ENCODE measurements at regions of chr3 and their contacts with region 1.

Region 1: DNA sequence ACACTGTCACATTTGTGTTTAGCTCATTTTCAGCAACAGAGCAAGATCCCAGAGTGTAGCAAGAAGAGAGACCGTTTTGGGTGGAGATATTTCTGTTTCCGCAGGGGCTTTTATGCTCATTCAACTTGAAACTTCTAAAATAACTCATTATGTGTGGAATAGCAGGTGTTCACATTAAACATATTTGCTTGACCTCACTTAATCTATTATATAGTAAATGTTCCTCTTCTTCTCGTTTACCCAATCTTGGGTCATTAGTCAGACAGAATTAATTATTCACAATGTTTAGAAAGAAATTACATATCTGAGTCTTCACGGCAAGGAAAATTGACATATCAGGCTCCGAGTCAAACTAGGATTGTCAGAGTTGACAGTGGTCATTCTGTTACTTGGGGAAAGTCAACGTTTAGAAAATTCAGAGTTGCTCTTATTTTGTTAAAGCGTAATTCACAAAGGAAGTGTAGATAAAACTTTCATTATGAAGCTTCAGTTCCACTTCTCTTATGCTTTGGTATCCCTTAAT is 222.9 kb downstream of the TPRG1 start:
- DNase-seq: peak; percentile 64
- ATAC-seq: peak; percentile 90
- H3K4me3 ChIP-seq: peak overlapping the region; percentile 6; the same call in 1 of the 2 replicates
- H3K27ac ChIP-seq: peak overlapping the region; percentile 86
- H3K4me1 ChIP-seq: peaks cover 28% of the 10 kb centered on the region
- H3K27me3 ChIP-seq: no peaks in the 10 kb centered on the region
- CTCF ChIP-seq: no peak
- EP300 ChIP-seq: peak; percentile 37 to 59; a peak in 3 of 4 replicates
- POLR2A ChIP-seq: no peak
- RAD21 ChIP-seq: 0 out of 2 replicates have a peak, but pooled peaks have one; percentile 20

Region 2: DNA sequence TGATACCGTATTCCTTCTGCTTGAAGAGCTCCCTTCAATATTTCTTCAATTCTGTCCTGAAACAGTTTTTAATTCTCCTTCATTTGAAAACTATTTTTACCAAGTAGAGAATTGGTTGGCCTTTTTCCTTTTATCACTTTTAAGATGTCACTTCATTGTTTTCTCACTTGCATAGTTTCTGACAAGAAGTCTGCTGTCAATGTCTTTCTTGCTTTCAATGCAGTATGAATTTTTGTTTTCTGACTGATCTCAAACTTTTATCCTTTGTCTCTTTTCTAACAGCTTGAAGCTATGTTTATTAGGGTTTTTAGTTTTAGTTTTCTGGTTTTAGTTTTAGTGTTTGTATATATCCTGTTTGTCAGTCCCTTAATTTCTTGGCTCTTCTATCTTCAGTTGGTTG is 587.7 kb before region 1 on chr3:
- CTCF ChIA-PET with region 1: no interaction called
- POLR2A ChIA-PET with region 1: no interaction called
- RAD21 ChIA-PET with region 1: no interaction called
- SMC1A ChIA-PET with region 1: no interaction called
- in situ Hi-C with region 1: no loop called
- intact Hi-C with region 1: no loop called
- DNase-seq: no peak
- ATAC-seq: no peak
- H3K4me3 ChIP-seq: no peak overlapping the region
- H3K27ac ChIP-seq: no peak overlapping the region
- H3K4me1 ChIP-seq: no peaks in the 10 kb centered on the region
- H3K27me3 ChIP-seq: no peaks in the 10 kb centered on the region
- CTCF ChIP-seq: no peak
- EP300 ChIP-seq: no peak
- POLR2A ChIP-seq: no peak
- RAD21 ChIP-seq: no peak

Region 3: DNA sequence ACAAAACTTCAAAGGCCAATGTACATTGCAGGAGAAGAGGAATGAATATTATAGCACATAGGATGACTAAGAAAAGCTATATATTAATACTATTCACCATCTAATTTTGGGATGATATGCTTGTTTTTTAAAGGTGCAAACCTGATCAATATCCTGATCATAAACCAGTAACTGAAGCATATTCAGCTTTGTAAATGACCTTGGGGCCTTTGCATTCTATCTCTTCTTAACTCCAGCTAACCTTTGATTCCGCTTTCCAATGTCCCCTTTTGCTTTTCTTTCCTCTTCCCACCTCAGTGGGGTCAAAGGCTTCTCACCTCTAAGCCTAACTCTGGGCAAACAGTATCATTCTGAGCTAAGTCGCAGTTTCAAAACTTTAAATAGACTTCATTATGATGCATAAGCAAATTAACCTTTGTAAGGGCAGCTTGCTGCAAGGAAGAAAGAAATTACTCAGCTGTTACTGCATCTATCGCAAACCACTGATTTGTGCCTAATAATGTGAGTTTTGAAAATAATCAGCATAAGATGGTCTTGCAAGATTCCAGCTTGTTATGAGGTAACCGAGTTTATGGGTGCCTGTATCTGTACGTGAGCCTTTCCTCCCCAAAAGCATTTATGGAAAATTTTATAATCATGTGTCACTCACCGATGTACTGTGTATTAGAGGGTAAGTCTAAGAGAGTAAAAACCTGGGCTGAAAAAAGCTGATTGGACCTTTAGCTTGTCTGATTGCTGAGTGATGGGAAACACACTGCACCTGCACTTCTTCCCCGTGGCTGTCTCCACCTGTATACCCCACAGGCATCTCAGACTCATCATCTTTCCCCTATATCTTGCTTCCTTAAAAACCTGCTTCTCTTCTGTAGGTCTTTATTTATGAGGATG is 106.1 kb before region 1 on chr3:
- CTCF ChIA-PET with region 1: interaction called, 6 read pairs
- POLR2A ChIA-PET with region 1: no interaction called
- RAD21 ChIA-PET with region 1: interaction called, 3 read pairs
- SMC1A ChIA-PET with region 1: interaction called, 3 read pairs
- in situ Hi-C with region 1: no loop called
- intact Hi-C with region 1: loop called (anchors 5 kb)
- DNase-seq: peak; percentile 73
- ATAC-seq: peak; percentile 90
- H3K4me3 ChIP-seq: peak overlapping the region; percentile 60
- H3K27ac ChIP-seq: peak overlapping the region; percentile 72
- H3K4me1 ChIP-seq: peaks cover 31% of the 10 kb centered on the region
- H3K27me3 ChIP-seq: peaks cover 0 to 2% of the 10 kb centered on the region in 2 experiments; a peak in 1 of 4 replicates
- CTCF ChIP-seq: no peak
- EP300 ChIP-seq: peak; percentile 58 to 70; a peak in 3 of 4 replicates
- POLR2A ChIP-seq: no peak
- RAD21 ChIP-seq: peak; percentile 10; the same call in 1 of the 2 replicates

Region 4: GRCh38 chr3:189324538-189325138 is 70.0 kb before region 1 on chr3:
- CTCF ChIA-PET with region 1: no interaction called
- POLR2A ChIA-PET with region 1: no interaction called
- RAD21 ChIA-PET with region 1: interaction called, 5 read pairs
- SMC1A ChIA-PET with region 1: interaction called, 3 read pairs
- in situ Hi-C with region 1: no loop called
- intact Hi-C with region 1: loop called (anchors 1 kb)
- DNase-seq: peak; percentile 94
- ATAC-seq: peak; percentile 100
- H3K4me3 ChIP-seq: no peak overlapping the region
- H3K27ac ChIP-seq: peak overlapping the region; percentile 44; the same call in 1 of the 2 replicates
- H3K4me1 ChIP-seq: peaks cover 15% of the 10 kb centered on the region
- H3K27me3 ChIP-seq: no peaks in the 10 kb centered on the region
- CTCF ChIP-seq: no peak
- EP300 ChIP-seq: peak in 1 of 2 experiments; percentile 69; a peak in 1 of 4 replicates
- POLR2A ChIP-seq: no peak
- RAD21 ChIP-seq: 0 out of 2 replicates have a peak, but pooled peaks have one; percentile 14

Region 5: DNA sequence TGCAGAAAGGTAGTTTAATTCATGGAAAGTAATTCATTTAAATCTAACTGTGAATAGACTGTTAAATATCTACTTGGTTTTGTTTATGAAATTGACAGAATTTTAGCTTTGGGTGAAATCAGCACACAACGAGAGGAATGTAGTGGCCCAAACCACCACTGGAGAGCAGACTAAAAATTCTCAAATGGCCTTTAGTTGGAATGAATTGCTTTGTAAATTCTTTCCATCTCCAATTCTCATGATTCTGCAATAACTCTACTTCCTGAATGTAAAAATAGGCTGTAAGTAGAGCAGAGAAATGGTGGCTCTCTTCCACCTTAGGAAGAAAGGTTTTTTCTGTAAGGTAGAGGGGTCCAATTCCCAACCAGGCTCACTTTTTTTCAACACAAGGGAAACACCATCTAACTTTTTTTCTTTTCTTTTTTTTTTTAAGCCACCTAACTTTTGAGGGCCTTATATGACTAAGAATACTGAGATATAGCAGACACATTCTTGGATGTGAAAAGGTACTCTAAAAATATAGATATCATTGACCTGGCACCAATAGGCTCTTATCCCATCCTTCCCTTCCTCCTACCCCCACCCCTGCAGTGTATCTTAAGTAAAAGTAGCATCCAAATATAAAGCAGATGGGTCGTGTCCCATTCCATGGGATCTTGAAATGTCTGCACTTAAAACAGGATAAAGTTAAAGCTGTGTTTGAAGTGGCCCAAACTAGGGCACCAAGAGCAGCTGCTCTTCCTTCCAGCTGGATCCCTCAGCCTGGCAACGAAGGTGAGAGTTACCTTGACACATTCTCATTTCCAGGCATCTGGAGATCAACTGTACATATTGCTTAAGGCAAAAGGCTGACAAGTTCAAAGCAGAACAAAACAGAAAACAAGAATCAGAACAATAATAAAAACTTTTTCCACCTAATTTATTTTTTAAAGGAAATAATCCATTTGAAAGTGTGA is 28.8 kb before region 1 on chr3:
- CTCF ChIA-PET with region 1: interaction called, 3 read pairs
- POLR2A ChIA-PET with region 1: interaction called, 3 read pairs
- RAD21 ChIA-PET with region 1: no interaction called
- SMC1A ChIA-PET with region 1: interaction called, 11 read pairs
- in situ Hi-C with region 1: no loop called
- intact Hi-C with region 1: no loop called
- DNase-seq: no peak
- ATAC-seq: no peak
- H3K4me3 ChIP-seq: no peak overlapping the region
- H3K27ac ChIP-seq: no peak overlapping the region
- H3K4me1 ChIP-seq: no peaks in the 10 kb centered on the region; the same call in 1 of the 2 replicates
- H3K27me3 ChIP-seq: no peaks in the 10 kb centered on the region
- CTCF ChIP-seq: no peak
- EP300 ChIP-seq: no peak
- POLR2A ChIP-seq: no peak
- RAD21 ChIP-seq: no peak

Region 6: GRCh38 chr3:189404797-189405484 is 10.3 kb after region 1 on chr3:
- CTCF ChIA-PET with region 1: interaction called, 5 read pairs
- POLR2A ChIA-PET with region 1: no interaction called
- RAD21 ChIA-PET with region 1: interaction called, 11 read pairs
- SMC1A ChIA-PET with region 1: interaction called, 32 read pairs
- in situ Hi-C with region 1: no loop called
- intact Hi-C with region 1: no loop called
- DNase-seq: peak; percentile 33
- ATAC-seq: peak; percentile 86
- H3K4me3 ChIP-seq: peak overlapping the region; percentile 23; the same call in 1 of the 2 replicates
- H3K27ac ChIP-seq: peak overlapping the region; percentile 22; the same call in 1 of the 2 replicates
- H3K4me1 ChIP-seq: no peaks in the 10 kb centered on the region
- H3K27me3 ChIP-seq: no peaks in the 10 kb centered on the region
- CTCF ChIP-seq: no peak
- EP300 ChIP-seq: no peak
- POLR2A ChIP-seq: no peak
- RAD21 ChIP-seq: no peak

Region 7: DNA sequence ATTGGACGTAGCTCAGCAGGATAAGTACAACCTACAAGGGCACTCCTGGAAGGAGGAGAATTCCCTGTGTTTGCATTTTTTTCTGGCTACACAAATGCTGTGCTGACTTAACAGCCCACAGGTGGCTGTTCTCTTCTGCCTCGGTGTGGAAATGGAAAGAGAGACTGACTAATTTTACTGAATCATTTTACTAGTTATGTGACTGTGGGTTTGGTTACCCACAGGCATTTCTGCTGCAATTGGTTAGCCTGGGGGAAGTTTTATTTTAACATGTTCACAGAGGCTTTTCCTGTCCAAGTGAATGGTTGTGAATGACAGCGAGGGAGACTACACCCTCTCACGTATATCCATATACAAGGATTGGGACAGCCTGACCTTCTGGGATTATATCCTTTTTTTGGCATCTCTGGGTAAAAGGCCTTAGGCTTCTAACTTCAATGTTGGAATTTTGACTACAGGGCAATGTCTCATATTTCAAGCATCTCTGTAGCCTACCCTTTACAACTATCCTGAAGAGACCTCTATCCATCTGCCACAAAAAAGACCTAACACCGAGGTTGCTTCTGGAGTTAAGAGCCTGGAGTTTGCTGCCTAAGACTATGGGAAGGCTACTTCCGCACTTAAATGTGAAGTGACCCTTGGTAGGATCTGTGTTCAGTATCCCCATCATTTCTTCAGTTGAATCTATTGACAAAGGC is 169.4 kb after region 1 on chr3:
- CTCF ChIA-PET with region 1: interaction called, 3 read pairs
- POLR2A ChIA-PET with region 1: no interaction called
- RAD21 ChIA-PET with region 1: interaction called, 3 read pairs
- SMC1A ChIA-PET with region 1: interaction called, 4 read pairs
- in situ Hi-C with region 1: no loop called
- intact Hi-C with region 1: loop called (anchors 5 kb)
- DNase-seq: peak; percentile 82
- ATAC-seq: peak; percentile 84
- H3K4me3 ChIP-seq: no peak overlapping the region
- H3K27ac ChIP-seq: peak overlapping the region; percentile 60
- H3K4me1 ChIP-seq: peaks cover 48% of the 10 kb centered on the region
- H3K27me3 ChIP-seq: no peaks in the 10 kb centered on the region
- CTCF ChIP-seq: 0 out of 6 replicates have a peak, but pooled peaks of 2 of the 3 experiments have one; percentile 3 to 5
- EP300 ChIP-seq: peak; percentile 43 to 51; a peak in 2 of 4 replicates
- POLR2A ChIP-seq: no peak
- RAD21 ChIP-seq: peak; percentile 34; the same call in 1 of the 2 replicates

Region 8: GRCh38 chr3:189630767-189631372 is 236.2 kb after region 1 on chr3:
- CTCF ChIA-PET with region 1: no interaction called
- POLR2A ChIA-PET with region 1: no interaction called
- RAD21 ChIA-PET with region 1: interaction called, 10 read pairs
- SMC1A ChIA-PET with region 1: interaction called, 14 read pairs
- in situ Hi-C with region 1: no loop called
- intact Hi-C with region 1: loop called (anchors 5 kb)
- DNase-seq: peak; percentile 73
- ATAC-seq: peak; percentile 81
- H3K4me3 ChIP-seq: peak overlapping the region; percentile 65
- H3K27ac ChIP-seq: peak overlapping the region; percentile 86
- H3K4me1 ChIP-seq: peaks cover 13% of the 10 kb centered on the region; the same call in 1 of the 2 replicates
- H3K27me3 ChIP-seq: no peaks in the 10 kb centered on the region
- CTCF ChIP-seq: no peak
- EP300 ChIP-seq: peak in 1 of 2 experiments; percentile 41; a peak in 1 of 4 replicates
- POLR2A ChIP-seq: no peak
- RAD21 ChIP-seq: 0 out of 2 replicates have a peak, but pooled peaks have one; percentile 6

Measured in GM12878 (cell line).